ENCODE measurements at regions of chr11 and their contacts with region 1.

Region 1: DNA sequence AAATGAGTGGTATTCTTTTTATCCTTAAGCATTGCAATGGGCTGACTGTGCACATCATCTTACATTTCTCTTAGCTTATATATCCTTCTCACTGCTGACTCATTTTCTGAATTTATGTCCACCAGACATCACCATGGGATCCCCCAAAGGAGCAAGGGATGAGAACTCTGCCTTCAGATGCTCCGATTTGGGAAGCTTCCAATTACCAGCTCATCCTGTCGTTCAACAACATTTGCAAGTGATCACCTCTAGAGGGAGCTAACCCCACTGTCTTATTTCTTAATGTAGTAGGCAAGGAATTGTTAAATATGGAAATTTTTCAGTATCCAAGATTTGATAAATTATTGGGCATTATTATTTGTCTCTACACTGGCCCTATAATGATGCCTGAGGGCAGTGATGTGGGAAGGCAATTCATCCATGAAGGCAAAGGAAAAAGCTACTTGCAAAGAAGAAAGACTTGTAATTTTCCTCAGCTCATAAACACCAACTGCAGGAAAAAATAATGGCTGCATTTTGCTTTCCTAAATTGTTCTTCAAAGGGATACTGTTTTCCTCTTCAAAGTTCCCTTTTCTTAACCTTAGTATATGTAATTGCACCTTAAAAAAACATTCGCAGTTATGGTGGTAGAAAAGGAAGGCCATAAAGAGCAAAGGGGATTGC is 102.4 kb upstream of the FSHB start:
- DNase-seq: no peak
- H3K4me3 ChIP-seq: no peak overlapping the region
- CTCF ChIP-seq: peak; percentile 37

Region 2: DNA sequence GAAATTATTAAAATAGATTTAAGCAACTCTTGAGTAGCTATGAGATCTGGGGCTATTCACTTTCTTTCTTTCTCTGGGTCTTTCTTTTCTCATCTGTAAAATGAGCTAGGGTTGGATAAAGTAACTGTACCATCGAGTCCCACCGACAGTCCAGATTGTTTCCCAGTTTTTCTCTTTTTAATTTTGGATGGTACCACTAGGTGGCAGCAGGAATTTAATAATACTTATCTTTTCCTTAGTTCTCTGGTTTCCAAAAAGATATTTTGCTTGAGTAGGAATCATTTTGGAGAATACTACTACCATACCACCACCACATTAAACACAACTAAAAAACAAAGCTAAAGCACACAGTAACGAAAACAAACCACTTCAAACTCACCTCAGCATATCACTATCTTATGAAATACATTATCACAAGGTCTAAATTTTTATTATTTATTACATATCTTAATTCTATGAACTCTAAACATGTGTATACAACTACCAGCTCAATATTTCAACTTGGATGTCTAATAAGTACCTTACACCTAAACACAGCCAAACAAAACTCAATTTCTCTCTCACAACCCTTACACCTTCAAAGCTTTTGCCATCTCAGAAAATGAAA is 695.6 kb before region 1 on chr11:
- CTCF ChIA-PET with region 1: interaction called, 12 read pairs
- POLR2A ChIA-PET with region 1: no interaction called
- DNase-seq: no peak
- H3K4me3 ChIP-seq: no peak overlapping the region
- CTCF ChIP-seq: peak; percentile 23

Region 3: GRCh38 chr11:29809121-29809520 is 319.3 kb before region 1 on chr11:
- CTCF ChIA-PET with region 1: no interaction called
- POLR2A ChIA-PET with region 1: no interaction called
- DNase-seq: no peak
- H3K4me3 ChIP-seq: no peak overlapping the region
- CTCF ChIP-seq: no peak

Region 4: GRCh38 chr11:30107899-30108298 is 20.5 kb before region 1 on chr11:
- CTCF ChIA-PET with region 1: interaction called, 45 read pairs
- POLR2A ChIA-PET with region 1: no interaction called
- DNase-seq: peak; percentile 37
- H3K4me3 ChIP-seq: no peak overlapping the region
- CTCF ChIP-seq: no peak

Region 5: GRCh38 chr11:30314625-30315024 is 186.2 kb after region 1 on chr11:
- CTCF ChIA-PET with region 1: interaction called, 57 read pairs
- POLR2A ChIA-PET with region 1: no interaction called
- DNase-seq: no peak
- H3K4me3 ChIP-seq: no peak overlapping the region
- CTCF ChIP-seq: peak; percentile 34

Region 6: DNA sequence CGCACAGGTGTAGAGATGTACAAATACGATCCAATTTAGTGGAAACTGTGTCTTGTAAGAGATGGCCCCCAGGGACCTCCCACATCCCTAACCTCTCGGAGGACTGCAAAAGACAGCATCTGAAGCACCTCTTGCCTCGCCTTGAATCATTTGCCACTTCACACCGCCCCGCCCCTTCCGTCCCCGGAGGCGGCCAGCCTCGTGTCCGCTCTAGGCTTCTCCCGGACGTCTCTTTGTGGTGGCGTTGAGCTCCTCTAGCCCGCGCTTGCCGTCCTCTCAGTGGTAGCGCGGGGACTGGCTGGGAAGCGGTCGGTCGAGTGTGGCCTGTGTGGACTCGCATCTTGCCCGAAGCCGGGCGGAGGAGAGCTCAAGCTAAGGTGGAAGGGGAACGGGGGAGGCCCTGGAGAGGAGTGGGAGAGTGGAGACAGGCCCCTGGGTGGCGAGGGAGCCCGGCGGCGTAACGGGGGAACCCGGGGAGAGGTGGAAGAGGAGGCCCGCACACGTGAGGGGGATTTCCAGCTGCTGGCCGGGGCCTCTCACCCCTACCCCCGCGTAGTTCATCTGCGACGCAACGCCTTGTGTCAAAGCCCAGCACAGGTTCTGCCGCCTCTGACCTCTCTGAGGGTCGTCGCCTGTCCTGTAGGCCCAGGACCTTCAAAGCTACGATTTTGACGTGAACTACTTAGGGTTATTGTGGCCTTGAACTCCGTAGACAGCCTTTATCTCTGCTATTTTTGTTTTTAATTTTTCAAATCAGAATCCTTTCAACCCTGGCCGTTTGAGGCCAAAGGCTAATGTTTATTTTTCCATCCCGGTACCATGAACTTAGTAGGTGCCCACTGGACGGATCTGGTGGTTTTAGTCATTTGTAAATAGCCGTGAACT is 194.7 kb after region 1 on chr11 and contains the start of gene ARL14EP:
- CTCF ChIA-PET with region 1: interaction called, 57 read pairs
- POLR2A ChIA-PET with region 1: no interaction called
- DNase-seq: peak; percentile 80
- H3K4me3 ChIP-seq: peak within 1 kb of the TSS; percentile 88
- CTCF ChIP-seq: no peak